SK-N-SH (cell line): ENCODE measurements at regions of chr7 and their contacts with region 1.

Region 1: DNA sequence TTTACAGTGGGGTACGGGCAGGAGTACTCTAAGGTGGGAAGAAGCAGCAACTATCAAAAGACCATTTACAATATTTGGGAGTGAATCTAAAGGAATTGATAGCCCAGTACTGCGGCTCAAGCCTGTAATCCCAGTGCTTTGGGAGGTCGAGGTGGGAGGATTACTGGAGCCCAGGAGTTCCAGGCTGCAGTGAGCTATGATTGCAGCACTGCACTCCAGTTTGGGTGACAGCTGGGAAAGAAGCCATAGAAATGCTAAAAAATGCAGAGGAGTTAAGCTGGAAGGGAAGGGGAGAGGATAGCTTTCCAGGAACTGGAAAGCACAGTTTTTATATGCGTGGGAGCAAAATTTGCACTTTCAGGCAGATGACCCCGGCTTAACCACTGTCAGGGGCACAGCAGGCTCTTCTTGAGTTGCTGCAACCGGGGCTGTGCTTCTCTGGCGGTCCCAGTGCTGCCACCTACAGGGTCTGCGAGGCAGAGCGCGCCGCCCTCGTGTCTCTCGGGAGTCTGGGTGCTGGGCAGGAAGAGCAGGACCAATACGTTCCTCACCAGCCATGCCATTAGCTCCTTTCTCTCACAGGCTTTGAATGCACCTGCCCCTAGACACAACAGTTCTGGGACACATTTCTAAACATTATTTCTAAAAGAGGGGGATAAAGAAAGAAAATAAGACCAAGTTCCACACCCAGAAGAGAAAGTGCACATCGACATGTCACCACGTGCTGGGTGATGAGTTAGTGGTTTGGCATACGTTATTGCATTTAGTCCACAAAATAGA is 10.1 kb upstream of the BMPER start:
- DNase-seq: peak; percentile 84
- H3K4me3 ChIP-seq: peak overlapping the region in 1 of 2 experiments; percentile 4; a peak in 1 of 4 replicates
- H3K27ac ChIP-seq: no peak overlapping the region
- H3K4me1 ChIP-seq: peaks cover 2 to 10% of the 10 kb centered on the region in 2 experiments; a peak in 2 of 4 replicates
- H3K27me3 ChIP-seq: no peaks in the 10 kb centered on the region
- CTCF ChIP-seq: peak; percentile 99
- EP300 ChIP-seq: no peak
- RAD21 ChIP-seq: peak; percentile 86

Region 2: GRCh38 chr7:33143996-33144718 is 751.1 kb before region 1 on chr7:
- CTCF ChIA-PET with region 1: no interaction called
- POLR2A ChIA-PET with region 1: no interaction called
- DNase-seq: no peak
- H3K4me3 ChIP-seq: no peak overlapping the region
- H3K27ac ChIP-seq: no peak overlapping the region
- H3K4me1 ChIP-seq: no peaks in the 10 kb centered on the region
- H3K27me3 ChIP-seq: no peaks in the 10 kb centered on the region
- CTCF ChIP-seq: no peak
- EP300 ChIP-seq: no peak
- RAD21 ChIP-seq: no peak

Region 3: DNA sequence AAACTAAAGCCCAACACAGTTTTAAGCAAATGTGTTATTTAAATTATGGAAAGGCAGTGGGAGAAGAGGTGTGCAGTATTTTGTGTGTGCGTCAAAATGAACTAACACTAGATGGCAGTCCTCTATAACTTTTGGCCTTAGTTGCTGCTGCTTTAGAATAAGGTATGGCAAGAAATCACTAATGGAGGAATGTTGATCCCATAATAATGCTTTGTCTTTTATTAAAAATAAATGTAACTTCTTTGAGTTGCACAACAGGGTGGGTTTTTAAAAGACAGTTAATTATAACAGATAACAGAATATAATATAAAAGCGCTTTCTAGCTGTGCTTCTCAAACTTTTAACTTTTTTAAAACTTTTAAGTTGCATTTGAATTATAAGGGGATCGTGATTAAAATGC is 709.4 kb before region 1 on chr7:
- CTCF ChIA-PET with region 1: interaction called, 18 read pairs
- POLR2A ChIA-PET with region 1: no interaction called
- DNase-seq: peak; percentile 63
- H3K4me3 ChIP-seq: no peak overlapping the region; a peak in 1 of 4 replicates
- H3K27ac ChIP-seq: no peak overlapping the region
- H3K4me1 ChIP-seq: peaks cover 0 to 6% of the 10 kb centered on the region in 2 experiments; a peak in 2 of 4 replicates
- H3K27me3 ChIP-seq: no peaks in the 10 kb centered on the region
- CTCF ChIP-seq: peak; percentile 95
- EP300 ChIP-seq: no peak
- RAD21 ChIP-seq: peak; percentile 98

Region 4: GRCh38 chr7:33243319-33243881 is 651.8 kb before region 1 on chr7:
- CTCF ChIA-PET with region 1: interaction called, 25 read pairs
- POLR2A ChIA-PET with region 1: no interaction called
- DNase-seq: peak; percentile 57
- H3K4me3 ChIP-seq: no peak overlapping the region
- H3K27ac ChIP-seq: no peak overlapping the region
- H3K4me1 ChIP-seq: no peaks in the 10 kb centered on the region
- H3K27me3 ChIP-seq: no peaks in the 10 kb centered on the region
- CTCF ChIP-seq: peak; percentile 97
- EP300 ChIP-seq: no peak
- RAD21 ChIP-seq: peak; percentile 99

Region 5: DNA sequence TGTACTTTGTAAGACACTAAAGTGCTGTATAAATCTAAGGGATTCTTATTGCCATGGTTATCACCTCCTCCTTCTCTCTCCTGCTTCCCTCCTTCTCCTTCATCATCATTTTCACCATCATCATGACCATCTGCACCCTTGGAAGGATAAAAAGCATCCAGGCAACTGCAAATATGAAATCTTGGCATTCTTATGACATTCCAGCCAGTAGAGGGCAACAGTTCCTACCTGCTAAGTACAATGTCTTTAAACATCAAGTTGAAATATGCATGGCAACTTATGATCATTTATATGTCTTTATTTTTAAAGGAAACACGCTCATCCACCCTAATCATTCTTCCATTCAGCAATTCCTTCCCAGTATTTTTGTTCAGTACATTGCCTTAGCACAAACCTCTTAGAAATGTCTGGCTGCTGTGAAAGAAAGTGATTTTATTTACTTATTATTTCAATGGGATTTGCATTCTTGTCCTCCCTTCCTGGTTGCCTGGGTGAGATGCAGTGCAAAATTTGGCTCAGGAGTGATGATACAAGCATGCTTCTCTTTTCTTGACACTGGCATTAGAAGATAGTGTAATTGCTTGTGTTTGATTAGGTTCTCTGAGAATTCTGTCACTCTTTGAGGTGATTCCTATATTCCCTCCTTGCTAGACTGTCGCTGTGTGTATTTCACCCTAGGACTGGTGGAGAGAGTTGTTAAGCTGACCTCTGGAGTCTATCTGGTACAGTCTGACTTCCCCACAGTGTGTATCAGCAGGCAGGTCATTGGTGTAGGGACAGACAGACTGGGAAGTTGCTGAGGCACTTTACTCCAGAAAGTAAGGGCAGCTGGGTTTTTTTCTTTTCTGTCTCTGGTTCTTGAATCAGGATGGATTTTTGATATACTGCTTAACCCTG is 178.4 kb before region 1 on chr7:
- CTCF ChIA-PET with region 1: interaction called, 19 read pairs
- POLR2A ChIA-PET with region 1: no interaction called
- DNase-seq: no peak
- H3K4me3 ChIP-seq: no peak overlapping the region
- H3K27ac ChIP-seq: no peak overlapping the region
- H3K4me1 ChIP-seq: peaks cover 0 to 2% of the 10 kb centered on the region in 2 experiments; a peak in 2 of 4 replicates
- H3K27me3 ChIP-seq: no peaks in the 10 kb centered on the region
- CTCF ChIP-seq: peak; percentile 98
- EP300 ChIP-seq: no peak
- RAD21 ChIP-seq: peak; percentile 77

Region 6: DNA sequence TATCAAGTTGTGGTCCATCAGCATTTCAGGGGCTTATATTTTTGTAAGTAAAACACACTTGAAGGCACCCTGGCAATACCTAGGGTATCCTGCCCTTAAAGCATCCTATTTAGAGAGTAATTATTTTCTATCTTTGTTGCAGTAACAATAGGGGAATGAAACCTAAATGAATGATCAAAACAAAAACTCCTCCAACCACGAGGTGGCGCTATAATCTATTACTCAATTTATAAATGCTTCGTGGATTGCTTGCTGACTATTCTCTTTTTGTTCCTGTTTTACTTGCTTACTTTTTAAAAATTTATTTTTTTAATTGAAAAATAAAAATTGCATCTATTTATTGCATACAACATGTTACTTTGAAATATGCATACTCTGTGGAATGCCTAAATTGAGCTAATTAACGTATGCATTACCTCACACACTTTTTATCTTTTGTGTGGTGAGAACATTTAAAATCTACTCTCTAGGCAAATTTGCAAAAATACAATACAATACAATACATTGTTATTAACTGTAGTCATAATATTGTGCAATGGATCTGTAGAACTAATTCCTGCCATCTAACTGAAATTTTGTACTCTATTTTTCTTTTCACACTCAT is 137.6 kb before region 1 on chr7:
- CTCF ChIA-PET with region 1: interaction called, 71 read pairs
- POLR2A ChIA-PET with region 1: no interaction called
- DNase-seq: peak; percentile 45
- H3K4me3 ChIP-seq: no peak overlapping the region
- H3K27ac ChIP-seq: no peak overlapping the region
- H3K4me1 ChIP-seq: peaks cover 7 to 11% of the 10 kb centered on the region in 2 experiments; a peak in 3 of 4 replicates
- H3K27me3 ChIP-seq: no peaks in the 10 kb centered on the region
- CTCF ChIP-seq: peak; percentile 92
- EP300 ChIP-seq: no peak
- RAD21 ChIP-seq: peak; percentile 77

Region 7: GRCh38 chr7:33854801-33855350 is 40.3 kb before region 1 on chr7:
- CTCF ChIA-PET with region 1: interaction called, 11 read pairs
- POLR2A ChIA-PET with region 1: no interaction called
- DNase-seq: no peak
- H3K4me3 ChIP-seq: no peak overlapping the region
- H3K27ac ChIP-seq: no peak overlapping the region
- H3K4me1 ChIP-seq: no peaks in the 10 kb centered on the region
- H3K27me3 ChIP-seq: no peaks in the 10 kb centered on the region
- CTCF ChIP-seq: no peak
- EP300 ChIP-seq: no peak
- RAD21 ChIP-seq: no peak